HCT116 (cell line): ENCODE measurements at regions of chr1 and their contacts with region 1.

Region 1: DNA sequence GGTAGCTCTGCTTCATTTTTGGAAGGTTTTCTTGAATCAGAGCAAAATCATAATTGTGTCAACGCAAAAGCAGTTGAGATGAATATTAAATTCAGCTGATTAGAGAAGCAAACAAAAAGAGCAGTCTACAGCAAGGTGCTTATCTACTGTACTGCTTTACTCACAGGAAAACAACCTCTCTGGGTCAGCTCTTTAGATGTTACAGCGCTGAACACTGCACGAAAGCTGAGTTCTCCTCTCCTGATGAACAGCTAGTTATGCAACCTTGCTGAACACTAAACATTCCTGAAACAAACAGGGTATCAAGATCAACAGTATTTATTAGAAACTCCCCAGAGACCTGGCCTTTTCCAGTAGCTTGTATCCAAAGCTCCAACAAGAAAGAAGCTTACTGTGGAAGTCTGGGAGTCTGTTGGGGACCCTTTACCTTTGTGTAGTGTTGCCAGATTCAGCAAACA is 41.3 kb downstream of the TBCE start:
- DNase-seq: no peak
- ATAC-seq: no peak
- H3K4me3 ChIP-seq: no peak overlapping the region
- H3K27ac ChIP-seq: no peak overlapping the region
- H3K4me1 ChIP-seq: peaks cover 32 to 36% of the 10 kb centered on the region in 2 experiments
- H3K27me3 ChIP-seq: no peaks in the 10 kb centered on the region
- CTCF ChIP-seq: no peak
- POLR2A ChIP-seq: no peak
- RAD21 ChIP-seq: no peak

Region 2: DNA sequence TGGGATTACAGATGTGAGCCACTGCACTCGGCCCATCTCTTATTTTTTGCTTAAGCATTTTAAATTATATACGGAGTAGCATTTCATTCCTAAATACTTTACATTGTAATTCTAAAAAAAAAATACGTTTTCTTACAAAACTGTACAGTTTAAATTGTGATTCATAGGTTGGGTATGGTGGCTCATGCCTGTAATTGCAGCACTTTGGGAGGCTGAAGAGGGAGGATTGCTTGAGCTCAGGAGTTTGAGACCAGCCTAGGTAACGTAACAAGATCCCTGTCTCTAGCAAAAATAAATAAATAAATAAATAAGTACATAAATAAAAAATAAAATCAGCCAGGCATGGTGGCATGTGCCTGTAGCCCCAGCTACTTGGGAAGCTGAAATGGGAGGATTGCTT is 16.7 kb before region 1 on chr1:
- CTCF ChIA-PET with region 1: no interaction called
- POLR2A ChIA-PET with region 1: no interaction called
- RAD21 ChIA-PET with region 1: no interaction called
- intact Hi-C with region 1: loop called (anchors 2 kb)
- DNase-seq: no peak
- ATAC-seq: no peak
- H3K4me3 ChIP-seq: no peak overlapping the region
- H3K27ac ChIP-seq: no peak overlapping the region
- H3K4me1 ChIP-seq: peaks cover 3 to 4% of the 10 kb centered on the region in 2 experiments; a peak in 1 of 4 replicates
- H3K27me3 ChIP-seq: no peaks in the 10 kb centered on the region
- CTCF ChIP-seq: no peak
- POLR2A ChIP-seq: no peak
- RAD21 ChIP-seq: no peak